IMR-90 (cell line): ENCODE measurements at regions of chr21 and their contacts with region 1.

Region 1: DNA sequence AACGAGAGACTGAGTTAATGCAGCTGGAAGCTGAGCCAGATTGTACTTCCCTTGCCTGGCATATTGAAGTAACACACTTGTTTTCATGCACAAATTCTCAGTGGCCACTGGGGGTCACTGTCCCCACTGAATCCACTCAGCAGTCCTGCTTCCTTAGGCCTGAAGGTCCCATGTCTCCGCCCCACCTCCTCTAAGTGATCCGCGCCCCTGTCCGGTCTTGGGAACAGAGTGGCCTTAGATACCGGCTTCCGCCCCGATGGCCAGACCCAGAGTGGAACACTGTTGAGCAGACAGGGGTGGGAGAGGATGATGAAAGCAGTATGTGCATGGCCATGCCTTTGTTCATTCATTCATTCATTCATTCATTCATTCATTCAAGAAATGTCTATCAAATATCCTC is 34.8 kb downstream of the CHAF1B start:
- DNase-seq: peak; percentile 92
- ATAC-seq: peak; percentile 98
- H3K4me3 ChIP-seq: no peak overlapping the region
- H3K27ac ChIP-seq: no peak overlapping the region
- H3K4me1 ChIP-seq: no peaks in the 10 kb centered on the region
- H3K27me3 ChIP-seq: no peaks in the 10 kb centered on the region
- CTCF ChIP-seq: peak; percentile 93
- POLR2A ChIP-seq: no peak
- RAD21 ChIP-seq: peak; percentile 97

Region 2: GRCh38 chr21:36347278-36347961 is 72.6 kb before region 1 on chr21:
- CTCF ChIA-PET with region 1: no interaction called
- POLR2A ChIA-PET with region 1: no interaction called
- dilution Hi-C with region 1: no loop called
- in situ Hi-C with region 1: no loop called
- intact Hi-C with region 1: no loop called
- DNase-seq: peak; percentile 55
- ATAC-seq: peak; percentile 67
- H3K4me3 ChIP-seq: no peak overlapping the region
- H3K27ac ChIP-seq: peak overlapping the region; percentile 52
- H3K4me1 ChIP-seq: peaks cover 14% of the 10 kb centered on the region
- H3K27me3 ChIP-seq: no peaks in the 10 kb centered on the region
- CTCF ChIP-seq: no peak
- POLR2A ChIP-seq: no peak
- RAD21 ChIP-seq: no peak

Region 3: GRCh38 chr21:36589355-36589971 is 169.5 kb after region 1 on chr21:
- CTCF ChIA-PET with region 1: no interaction called
- POLR2A ChIA-PET with region 1: no interaction called
- dilution Hi-C with region 1: no loop called
- in situ Hi-C with region 1: no loop called
- intact Hi-C with region 1: loop called (anchors 1 kb)
- DNase-seq: peak; percentile 27
- ATAC-seq: peak; percentile 66
- H3K4me3 ChIP-seq: no peak overlapping the region
- H3K27ac ChIP-seq: no peak overlapping the region
- H3K4me1 ChIP-seq: no peaks in the 10 kb centered on the region
- H3K27me3 ChIP-seq: peaks cover 23% of the 10 kb centered on the region
- CTCF ChIP-seq: peak; percentile 56
- POLR2A ChIP-seq: no peak
- RAD21 ChIP-seq: peak; percentile 53